CD8-positive, alpha-beta memory T cell (primary cell): ENCODE measurements at regions of chr3 and their contacts with region 1.

Region 1: DNA sequence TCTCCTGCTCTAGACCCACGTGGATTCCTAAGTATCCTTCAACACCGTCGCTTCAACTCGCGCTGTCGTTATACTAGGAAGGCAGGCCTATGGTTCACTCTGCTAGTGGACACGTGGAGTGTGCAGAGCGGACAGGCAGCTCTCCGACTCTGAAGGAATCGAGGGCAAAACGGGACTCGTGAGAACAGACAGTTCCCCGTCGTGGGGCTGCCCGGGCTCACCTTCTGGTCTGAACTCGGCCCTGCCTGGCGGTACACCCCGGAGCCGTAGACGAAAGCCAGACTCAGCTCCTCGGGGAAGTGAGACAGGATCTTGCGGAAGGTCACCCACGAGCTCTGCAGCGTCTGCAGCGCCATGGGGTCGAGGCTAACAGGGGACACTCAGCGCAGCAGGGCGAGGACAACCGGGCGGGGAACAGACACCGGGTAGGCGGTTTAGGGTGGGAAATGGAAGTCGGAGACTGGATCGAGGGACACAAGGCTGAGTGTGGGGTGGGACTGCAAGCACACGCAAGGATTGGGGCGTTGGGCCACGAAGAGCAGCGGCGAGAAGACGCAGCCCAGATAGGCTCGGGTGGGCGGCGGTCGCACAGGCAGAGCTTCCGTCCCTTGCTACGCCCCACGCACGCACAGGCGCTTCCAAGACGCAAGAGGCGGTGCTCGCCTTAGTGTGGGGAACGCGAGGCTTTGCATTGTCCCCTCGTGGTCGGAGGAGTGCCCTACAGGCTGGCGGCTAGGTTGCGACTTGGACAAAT is at the start of gene TAMM41:
- DNase-seq: peak; percentile 74 to 93 (median 84)
- H3K4me3 ChIP-seq: peak within 1 kb of the TSS; percentile 97
- H3K4me3 Mint-ChIP-seq: peak within 1 kb of the TSS; percentile 97 to 100 (median 99)
- H3K27ac ChIP-seq: peak within 1 kb of the TSS; percentile 91
- H3K27ac Mint-ChIP-seq: peak within 1 kb of the TSS; percentile 86 to 100 (median 97)
- H3K4me1 ChIP-seq: peaks cover 27% of the 10 kb centered on the region
- H3K4me1 Mint-ChIP-seq: peaks cover 41 to 55% (median 52%) of the 10 kb centered on the region in 3 donors
- H3K27me3 ChIP-seq: no peaks in the 10 kb centered on the region
- H3K27me3 Mint-ChIP-seq: no peaks in the 10 kb centered on the region
- total RNA-seq, gene TAMM41: 22.9 to 26.1 TPM

Region 2: DNA sequence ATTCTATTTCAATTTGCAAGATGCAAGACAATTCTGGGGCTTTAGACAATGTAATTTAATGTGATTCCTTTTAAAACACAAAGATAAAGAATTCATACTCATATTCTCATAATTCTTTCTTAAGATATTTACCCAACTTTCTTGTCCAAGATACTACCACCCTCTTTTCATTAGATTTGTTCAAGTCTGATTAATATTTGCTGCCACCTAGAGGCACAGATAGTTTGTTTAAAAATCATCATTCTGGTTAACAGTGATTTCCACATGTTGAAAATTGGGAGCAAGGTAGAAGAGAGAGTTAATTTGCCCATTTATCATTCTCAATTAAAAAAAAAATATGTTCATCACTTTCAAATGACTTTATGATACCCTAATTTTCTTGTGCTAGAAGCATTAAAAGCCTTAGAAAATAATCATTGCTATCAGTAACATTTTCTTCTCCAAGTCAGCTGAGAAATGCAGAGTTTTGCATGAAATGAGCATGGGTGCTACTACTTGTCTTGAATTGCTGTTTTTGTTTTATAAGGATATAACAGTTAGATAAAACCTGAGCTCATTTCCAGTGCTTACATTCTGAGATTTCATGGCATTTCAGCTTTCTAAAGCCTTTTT is 11.3 kb before region 1 on chr3:
- CTCF ChIA-PET with region 1: interaction called, 18 read pairs
- POLR2A ChIA-PET with region 1: no interaction called
- DNase-seq: no peak
- H3K4me3 ChIP-seq: no peak overlapping the region
- H3K4me3 Mint-ChIP-seq: no peak overlapping the region
- H3K27ac ChIP-seq: no peak overlapping the region
- H3K27ac Mint-ChIP-seq: peak overlapping the region in 1 of 8 donors; percentile 9
- H3K4me1 ChIP-seq: no peaks in the 10 kb centered on the region
- H3K4me1 Mint-ChIP-seq: peaks cover 0 to 8% (median 4%) of the 10 kb centered on the region in 3 donors
- H3K27me3 ChIP-seq: no peaks in the 10 kb centered on the region
- H3K27me3 Mint-ChIP-seq: no peaks in the 10 kb centered on the region

Region 3: DNA sequence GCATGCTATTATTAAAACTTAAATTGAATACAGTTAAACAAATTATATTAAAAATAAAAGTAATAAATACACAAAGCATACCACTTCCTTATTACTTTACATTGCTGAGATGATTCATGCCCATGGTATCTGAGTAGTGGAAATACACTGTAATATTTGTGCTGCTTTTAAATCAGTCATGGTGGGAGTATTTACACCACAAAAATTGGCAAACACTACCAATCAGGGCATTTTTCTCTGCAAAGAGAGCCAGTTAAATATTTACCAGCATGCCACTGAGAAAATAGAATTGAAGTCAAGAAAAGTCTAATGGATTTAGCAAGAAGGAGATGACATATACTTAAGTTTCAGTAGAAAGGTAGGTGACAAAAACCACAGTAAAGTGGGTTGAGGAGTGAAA is 462.1 kb after region 1 on chr3:
- CTCF ChIA-PET with region 1: no interaction called
- POLR2A ChIA-PET with region 1: no interaction called
- DNase-seq: no peak
- H3K4me3 ChIP-seq: no peak overlapping the region
- H3K4me3 Mint-ChIP-seq: no peak overlapping the region
- H3K27ac ChIP-seq: no peak overlapping the region
- H3K27ac Mint-ChIP-seq: no peak overlapping the region
- H3K4me1 ChIP-seq: no peaks in the 10 kb centered on the region
- H3K4me1 Mint-ChIP-seq: no peaks in the 10 kb centered on the region
- H3K27me3 ChIP-seq: no peaks in the 10 kb centered on the region
- H3K27me3 Mint-ChIP-seq: peaks cover 3 to 9% of the 10 kb centered on the region in 2 donors